ENCODE measurements at regions of chr6 and their contacts with region 1.

Region 1: GRCh38 chr6:108874470-108875160 is 26.4 kb downstream of the ARMC2 start:
- DNase-seq: peak; percentile 90
- ATAC-seq: peak; percentile 81
- H3K4me3 Mint-ChIP-seq: peak overlapping the region; percentile 62
- H3K27ac Mint-ChIP-seq: peak overlapping the region; percentile 100
- H3K4me1 Mint-ChIP-seq: peaks cover 73% of the 10 kb centered on the region
- H3K27me3 Mint-ChIP-seq: peaks cover 3% of the 10 kb centered on the region

Region 2: DNA sequence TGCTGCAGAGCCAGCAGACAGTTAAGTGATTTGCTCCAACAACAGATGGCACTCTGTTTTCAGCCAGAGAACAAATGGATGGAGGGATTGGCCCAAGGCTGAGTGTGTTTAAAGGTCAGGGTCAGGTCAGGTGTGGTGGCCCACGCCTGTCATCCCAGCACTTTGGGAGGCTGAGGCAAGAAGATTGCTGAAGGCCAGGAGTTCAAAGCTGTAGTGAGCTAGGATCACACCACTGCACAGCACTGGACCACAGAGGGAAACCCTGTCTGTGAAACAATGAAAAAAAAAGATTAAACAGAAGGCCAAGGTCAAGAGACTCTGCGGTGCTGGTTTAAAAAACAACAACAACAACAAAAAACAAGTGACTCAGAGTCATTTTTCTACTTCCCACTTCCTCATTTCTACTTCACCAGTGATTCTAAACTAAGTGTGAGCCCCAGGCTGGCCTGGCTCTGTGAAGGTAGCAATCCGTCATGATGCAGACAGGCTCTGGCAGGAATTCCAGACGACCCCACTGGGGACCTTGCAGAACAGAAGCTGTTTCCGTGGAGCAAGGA is 68.9 kb before region 1 on chr6:
- CTCF ChIA-PET with region 1: no interaction called
- DNase-seq: no peak
- ATAC-seq: peak; percentile 27
- H3K4me3 Mint-ChIP-seq: no peak overlapping the region
- H3K27ac Mint-ChIP-seq: peak overlapping the region; percentile 27
- H3K4me1 Mint-ChIP-seq: peaks cover 25% of the 10 kb centered on the region
- H3K27me3 Mint-ChIP-seq: no peaks in the 10 kb centered on the region

Region 3: DNA sequence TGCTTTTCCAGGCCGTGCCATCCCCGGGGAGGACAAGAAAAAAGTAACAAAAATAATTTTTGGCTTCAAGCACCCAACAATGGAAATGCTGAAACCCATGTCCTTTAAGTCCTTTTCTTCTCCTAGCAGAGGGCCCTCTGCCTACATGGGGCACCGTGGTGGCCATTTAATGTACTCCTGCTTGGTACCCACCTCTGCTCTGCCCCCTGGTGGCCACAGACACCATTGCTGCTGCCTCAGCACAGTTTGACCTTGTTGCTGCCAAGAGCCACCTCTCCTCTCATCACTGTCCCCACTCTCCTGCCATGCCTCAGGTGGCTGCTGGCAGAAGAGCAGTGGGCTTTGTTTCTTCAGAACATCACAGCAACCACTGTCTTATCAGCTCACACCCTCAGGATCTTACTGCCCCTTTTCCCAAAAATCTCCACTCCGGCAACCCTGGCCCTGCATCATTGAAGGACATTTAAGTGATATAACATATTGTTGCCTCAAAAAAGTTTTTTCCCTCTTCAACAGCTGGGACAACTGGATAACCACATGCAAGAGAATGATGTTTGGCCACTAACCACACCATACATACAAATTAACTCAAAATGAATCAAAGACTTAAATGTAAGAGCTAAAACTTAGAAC is 39.3 kb before region 1 on chr6:
- CTCF ChIA-PET with region 1: interaction called, 10 read pairs
- DNase-seq: peak; percentile 92
- ATAC-seq: peak; percentile 93
- H3K4me3 Mint-ChIP-seq: no peak overlapping the region
- H3K27ac Mint-ChIP-seq: peak overlapping the region; percentile 48
- H3K4me1 Mint-ChIP-seq: peaks cover 50% of the 10 kb centered on the region
- H3K27me3 Mint-ChIP-seq: no peaks in the 10 kb centered on the region

Measured in activated CD8-positive, alpha-beta memory T cell treated with anti-CD3 and anti-CD28 coated beads, Interleukin-2, amount 10 ng/mL, durations not matched to agents 7 days and 5 days (primary cell).